ENCODE measurements at regions of chr1 and their contacts with region 1.

Region 1: DNA sequence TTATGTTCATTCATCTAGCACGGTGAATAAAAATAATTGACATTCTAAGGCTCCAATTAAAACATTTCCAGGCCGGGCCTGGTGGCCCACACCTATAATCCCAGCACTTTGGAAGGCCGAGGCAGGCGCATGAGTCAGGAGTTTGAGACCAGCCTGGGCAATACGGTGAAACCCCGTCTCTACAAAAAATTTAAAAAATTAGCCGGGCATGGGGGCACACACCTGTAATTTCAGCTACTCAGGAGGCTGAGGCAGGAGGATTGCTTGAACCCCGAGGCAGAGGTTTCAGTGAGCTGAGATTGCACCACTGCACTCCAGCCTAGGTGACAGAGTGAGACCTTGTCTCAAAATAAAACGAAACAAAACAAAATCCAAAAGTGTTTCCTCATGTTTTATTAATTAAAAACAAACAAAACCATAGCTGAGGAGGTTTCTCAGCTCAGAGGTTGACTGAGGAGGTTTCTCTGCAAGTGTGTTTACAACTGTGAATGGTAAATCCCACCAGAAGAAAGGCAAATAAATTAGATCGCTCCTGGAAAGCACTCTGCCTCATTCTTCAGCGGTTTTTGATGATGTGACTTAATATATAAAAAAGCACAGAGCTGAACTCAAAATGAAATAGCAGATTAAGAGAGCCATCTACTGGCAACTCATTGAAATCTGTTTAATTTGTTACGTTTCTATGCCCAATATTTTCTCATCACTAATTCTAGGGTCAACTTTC is 37.7 kb upstream of the ATG4C start:
- DNase-seq: peak in 3 of 14 experiments; percentile 44 to 59 (median 53)
- ATAC-seq: no peak
- H3K4me3 ChIP-seq: no peak overlapping the region
- H3K4me3 Mint-ChIP-seq: no peak overlapping the region
- H3K27ac ChIP-seq: no peak overlapping the region
- H3K27ac Mint-ChIP-seq: no peak overlapping the region
- H3K4me1 ChIP-seq: no peaks in the 10 kb centered on the region
- H3K4me1 Mint-ChIP-seq: no peaks in the 10 kb centered on the region
- H3K27me3 ChIP-seq: no peaks in the 10 kb centered on the region
- H3K27me3 Mint-ChIP-seq: peaks cover 2% of the 10 kb centered on the region
- CTCF ChIP-seq: peak; percentile 82

Region 2: GRCh38 chr1:62082456-62083363 is 663.5 kb before region 1 on chr1:
- CTCF ChIA-PET with region 1: interaction called, 3 read pairs
- POLR2A ChIA-PET with region 1: no interaction called
- intact Hi-C with region 1: loop called in 1 of 2 experiments (anchors 5 kb)
- DNase-seq: peak in 12 of 14 experiments; percentile 4 to 53 (median 16)
- ATAC-seq: peak; percentile 54
- H3K4me3 ChIP-seq: no peak overlapping the region
- H3K4me3 Mint-ChIP-seq: no peak overlapping the region
- H3K27ac ChIP-seq: no peak overlapping the region
- H3K27ac Mint-ChIP-seq: no peak overlapping the region
- H3K4me1 ChIP-seq: no peaks in the 10 kb centered on the region
- H3K4me1 Mint-ChIP-seq: no peaks in the 10 kb centered on the region
- H3K27me3 ChIP-seq: no peaks in the 10 kb centered on the region
- H3K27me3 Mint-ChIP-seq: no peaks in the 10 kb centered on the region
- CTCF ChIP-seq: peak; percentile 95

Region 3: DNA sequence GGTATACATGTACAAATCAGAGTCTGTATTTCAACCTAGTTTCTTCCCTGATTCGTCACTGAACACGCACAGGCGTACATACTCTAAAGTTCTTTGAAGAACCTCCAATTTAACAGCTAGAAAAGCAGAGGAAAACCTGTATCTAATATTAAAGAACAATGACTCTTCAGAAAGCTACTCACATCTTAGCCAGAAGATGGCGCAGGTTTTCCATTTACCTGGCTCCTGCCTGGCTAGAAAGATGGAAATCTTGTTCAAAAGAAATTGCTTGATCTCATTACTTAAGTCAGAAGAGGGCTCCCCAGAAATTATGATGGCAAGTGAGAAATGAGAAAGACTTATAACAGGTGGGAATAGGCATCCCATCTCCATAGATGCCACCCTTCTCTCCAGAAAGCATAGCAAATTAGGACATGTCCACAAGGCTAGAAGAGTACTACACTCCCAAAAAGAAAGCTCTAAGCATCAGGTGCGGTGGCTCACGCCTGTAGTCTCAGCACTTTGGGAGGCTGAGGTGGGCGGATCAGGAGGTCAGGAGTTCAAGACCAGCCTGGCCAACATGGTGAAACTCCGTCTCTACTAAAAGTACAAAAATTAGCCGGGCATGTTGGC is 570.6 kb before region 1 on chr1:
- CTCF ChIA-PET with region 1: interaction called, 13 read pairs
- POLR2A ChIA-PET with region 1: no interaction called
- intact Hi-C with region 1: loop called (anchors 1 kb)
- DNase-seq: peak in 12 of 14 experiments; percentile 2 to 69 (median 18)
- ATAC-seq: peak; percentile 41
- H3K4me3 ChIP-seq: no peak overlapping the region
- H3K4me3 Mint-ChIP-seq: no peak overlapping the region
- H3K27ac ChIP-seq: no peak overlapping the region
- H3K27ac Mint-ChIP-seq: no peak overlapping the region
- H3K4me1 ChIP-seq: no peaks in the 10 kb centered on the region
- H3K4me1 Mint-ChIP-seq: no peaks in the 10 kb centered on the region
- H3K27me3 ChIP-seq: no peaks in the 10 kb centered on the region
- H3K27me3 Mint-ChIP-seq: peaks cover 7% of the 10 kb centered on the region
- CTCF ChIP-seq: peak; percentile 76

Region 4: DNA sequence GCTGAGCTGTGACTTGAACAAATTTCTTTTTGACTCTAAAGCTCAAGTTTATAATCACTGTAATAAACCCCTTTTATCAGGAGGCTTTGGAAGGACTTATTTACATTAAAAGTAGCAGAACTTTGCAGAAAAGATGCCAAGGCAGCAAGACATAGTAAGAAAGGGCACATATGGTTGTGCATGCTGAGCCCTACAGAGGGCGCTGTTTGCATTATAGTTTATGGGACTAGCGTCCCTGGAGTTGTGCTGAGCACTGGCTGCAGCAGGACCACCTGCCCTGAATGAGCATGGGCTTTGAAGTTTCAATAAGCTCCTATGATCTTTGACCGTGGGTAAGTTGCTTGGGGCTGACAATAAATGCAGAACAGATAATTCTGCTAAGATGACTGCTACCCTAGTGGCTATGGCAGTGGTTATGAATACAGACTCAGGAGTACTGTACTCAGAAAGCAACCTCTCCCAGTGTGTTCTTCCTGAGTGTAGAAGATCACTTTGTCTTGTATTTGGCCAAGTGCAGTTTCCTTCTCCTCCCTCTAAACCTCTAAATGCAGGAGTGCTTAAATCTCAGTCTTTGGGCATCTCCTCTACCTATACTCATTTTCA is 354.8 kb before region 1 on chr1:
- CTCF ChIA-PET with region 1: no interaction called
- POLR2A ChIA-PET with region 1: no interaction called
- intact Hi-C with region 1: loop called in 1 of 2 experiments (anchors 5 kb)
- DNase-seq: peak in 5 of 14 experiments; percentile 2 to 34 (median 8)
- ATAC-seq: no peak
- H3K4me3 ChIP-seq: no peak overlapping the region
- H3K4me3 Mint-ChIP-seq: no peak overlapping the region
- H3K27ac ChIP-seq: no peak overlapping the region
- H3K27ac Mint-ChIP-seq: no peak overlapping the region
- H3K4me1 ChIP-seq: no peaks in the 10 kb centered on the region
- H3K4me1 Mint-ChIP-seq: no peaks in the 10 kb centered on the region
- H3K27me3 ChIP-seq: no peaks in the 10 kb centered on the region
- H3K27me3 Mint-ChIP-seq: no peaks in the 10 kb centered on the region
- CTCF ChIP-seq: no peak

Region 5: GRCh38 chr1:62407405-62408009 is 338.7 kb before region 1 on chr1:
- CTCF ChIA-PET with region 1: no interaction called
- POLR2A ChIA-PET with region 1: no interaction called
- intact Hi-C with region 1: loop called (anchors 2 to 5 kb)
- DNase-seq: peak in 5 of 14 experiments; percentile 5 to 73 (median 45)
- ATAC-seq: peak; percentile 46
- H3K4me3 ChIP-seq: no peak overlapping the region
- H3K4me3 Mint-ChIP-seq: no peak overlapping the region
- H3K27ac ChIP-seq: no peak overlapping the region
- H3K27ac Mint-ChIP-seq: no peak overlapping the region
- H3K4me1 ChIP-seq: no peaks in the 10 kb centered on the region
- H3K4me1 Mint-ChIP-seq: no peaks in the 10 kb centered on the region
- H3K27me3 ChIP-seq: no peaks in the 10 kb centered on the region
- H3K27me3 Mint-ChIP-seq: no peaks in the 10 kb centered on the region
- CTCF ChIP-seq: peak; percentile 96

Region 6: GRCh38 chr1:62508187-62508758 is 238.0 kb before region 1 on chr1:
- CTCF ChIA-PET with region 1: interaction called, 19 read pairs
- POLR2A ChIA-PET with region 1: no interaction called
- intact Hi-C with region 1: loop called (anchors 1 kb)
- DNase-seq: peak in 4 of 14 experiments; percentile 20 to 56 (median 44)
- ATAC-seq: no peak
- H3K4me3 ChIP-seq: no peak overlapping the region
- H3K4me3 Mint-ChIP-seq: no peak overlapping the region
- H3K27ac ChIP-seq: no peak overlapping the region
- H3K27ac Mint-ChIP-seq: no peak overlapping the region
- H3K4me1 ChIP-seq: no peaks in the 10 kb centered on the region
- H3K4me1 Mint-ChIP-seq: no peaks in the 10 kb centered on the region
- H3K27me3 ChIP-seq: no peaks in the 10 kb centered on the region
- H3K27me3 Mint-ChIP-seq: no peaks in the 10 kb centered on the region
- CTCF ChIP-seq: peak; percentile 72

Measured in CD4-positive, alpha-beta T cell (primary cell).